AG04450 (cell line): ENCODE measurements at regions of chr1 and their contacts with region 1.

Region 1: DNA sequence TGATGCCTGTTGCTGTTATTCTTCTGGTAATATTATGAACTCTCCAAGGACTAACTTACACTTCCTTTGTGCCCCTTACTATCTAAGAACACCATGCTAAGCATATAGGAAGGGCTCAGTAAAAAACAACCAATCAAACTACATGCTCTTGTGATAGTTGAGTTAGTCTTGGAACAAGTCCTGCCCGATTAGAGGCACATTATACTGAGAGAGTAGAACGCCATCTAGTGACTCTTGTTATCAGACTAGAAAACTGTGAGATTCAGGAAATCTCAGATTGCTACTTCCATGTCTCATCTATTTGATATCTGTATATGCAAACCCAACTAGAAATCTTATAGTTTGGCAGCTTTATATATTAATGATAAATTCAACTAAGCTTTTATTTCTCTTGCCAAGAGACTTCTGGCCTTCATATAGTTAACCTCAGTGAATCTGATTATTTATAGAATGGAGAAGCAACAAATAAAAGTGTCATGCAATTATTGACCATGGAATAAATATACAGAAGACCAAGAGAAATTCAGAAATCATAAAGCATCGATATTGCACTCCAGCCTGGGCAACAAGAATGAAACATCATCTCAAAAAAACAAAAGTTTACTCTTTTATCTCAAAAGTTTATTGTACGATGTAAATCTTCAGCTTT is 7.8 kb upstream of the SRRM1 start:
- DNase-seq: peak; percentile 41
- H3K4me3 ChIP-seq: no peak overlapping the region
- H3K27ac ChIP-seq: no peak overlapping the region
- H3K27me3 ChIP-seq: peaks cover 10% of the 10 kb centered on the region
- CTCF ChIP-seq: peak; percentile 69

Region 2: GRCh38 chr1:23904748-23905357 is 730.5 kb before region 1 on chr1:
- CTCF ChIA-PET with region 1: no interaction called
- POLR2A ChIA-PET with region 1: no interaction called
- DNase-seq: no peak
- H3K4me3 ChIP-seq: no peak overlapping the region
- H3K27ac ChIP-seq: no peak overlapping the region
- H3K27me3 ChIP-seq: peaks cover 60% of the 10 kb centered on the region
- CTCF ChIP-seq: no peak

Region 3: DNA sequence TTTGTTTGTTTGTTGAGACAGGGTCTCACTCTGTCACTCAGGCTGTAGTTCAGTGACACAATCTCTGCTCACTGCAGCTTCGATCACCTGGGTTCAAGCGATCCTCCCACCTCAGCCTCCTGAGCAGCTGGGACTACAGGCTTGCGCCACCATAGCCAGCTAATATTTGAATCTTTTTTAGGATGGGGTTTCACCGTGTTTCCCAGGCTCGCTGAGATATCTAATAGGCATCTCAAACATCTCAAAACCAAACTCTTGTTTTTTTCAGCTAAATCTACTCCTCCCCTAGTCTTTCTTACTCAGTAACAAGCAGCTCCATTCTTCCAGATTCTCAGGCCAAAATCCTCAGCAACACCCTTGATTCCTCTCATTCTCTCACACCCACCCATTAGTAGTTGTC is 14.2 kb before region 1 on chr1:
- CTCF ChIA-PET with region 1: interaction called, 10 read pairs
- POLR2A ChIA-PET with region 1: no interaction called
- DNase-seq: no peak
- H3K4me3 ChIP-seq: no peak overlapping the region
- H3K27ac ChIP-seq: no peak overlapping the region
- H3K27me3 ChIP-seq: peaks cover 17% of the 10 kb centered on the region
- CTCF ChIP-seq: no peak

Region 4: GRCh38 chr1:24769656-24770651 is 134.6 kb after region 1 on chr1:
- CTCF ChIA-PET with region 1: no interaction called
- POLR2A ChIA-PET with region 1: no interaction called
- DNase-seq: peak; percentile 92
- H3K4me3 ChIP-seq: no peak overlapping the region
- H3K27ac ChIP-seq: peak overlapping the region; percentile 97
- H3K27me3 ChIP-seq: no peaks in the 10 kb centered on the region
- CTCF ChIP-seq: no peak